IMR-90 (cell line): ENCODE measurements at regions of chr5 and their contacts with region 1.

Region 1: GRCh38 chr5:6745706-6746222 is 32.5 kb downstream of the TENT4A start:
- DNase-seq: peak; percentile 79
- ATAC-seq: peak; percentile 93
- H3K4me3 ChIP-seq: no peak overlapping the region
- H3K27ac ChIP-seq: no peak overlapping the region
- H3K4me1 ChIP-seq: peaks cover 2% of the 10 kb centered on the region
- H3K27me3 ChIP-seq: no peaks in the 10 kb centered on the region
- CTCF ChIP-seq: peak; percentile 88
- POLR2A ChIP-seq: no peak
- RAD21 ChIP-seq: peak; percentile 93

Region 2: GRCh38 chr5:6377905-6378765 is 367.6 kb before region 1 on chr5 and contains the start of gene MED10:
- CTCF ChIA-PET with region 1: no interaction called
- POLR2A ChIA-PET with region 1: no interaction called
- dilution Hi-C with region 1: no loop called
- in situ Hi-C with region 1: no loop called
- intact Hi-C with region 1: loop called (anchors 10 kb)
- DNase-seq: peak; percentile 91
- ATAC-seq: peak; percentile 98
- H3K4me3 ChIP-seq: peak within 1 kb of the TSS; percentile 84
- H3K27ac ChIP-seq: peak within 1 kb of the TSS; percentile 80
- H3K4me1 ChIP-seq: peaks cover 4% of the 10 kb centered on the region
- H3K27me3 ChIP-seq: no peaks in the 10 kb centered on the region
- CTCF ChIP-seq: no peak
- POLR2A ChIP-seq: peak; percentile 85
- RAD21 ChIP-seq: no peak
- total RNA-seq, gene MED10: 9.1 and 15.6 TPM in 2 replicates

Region 3: DNA sequence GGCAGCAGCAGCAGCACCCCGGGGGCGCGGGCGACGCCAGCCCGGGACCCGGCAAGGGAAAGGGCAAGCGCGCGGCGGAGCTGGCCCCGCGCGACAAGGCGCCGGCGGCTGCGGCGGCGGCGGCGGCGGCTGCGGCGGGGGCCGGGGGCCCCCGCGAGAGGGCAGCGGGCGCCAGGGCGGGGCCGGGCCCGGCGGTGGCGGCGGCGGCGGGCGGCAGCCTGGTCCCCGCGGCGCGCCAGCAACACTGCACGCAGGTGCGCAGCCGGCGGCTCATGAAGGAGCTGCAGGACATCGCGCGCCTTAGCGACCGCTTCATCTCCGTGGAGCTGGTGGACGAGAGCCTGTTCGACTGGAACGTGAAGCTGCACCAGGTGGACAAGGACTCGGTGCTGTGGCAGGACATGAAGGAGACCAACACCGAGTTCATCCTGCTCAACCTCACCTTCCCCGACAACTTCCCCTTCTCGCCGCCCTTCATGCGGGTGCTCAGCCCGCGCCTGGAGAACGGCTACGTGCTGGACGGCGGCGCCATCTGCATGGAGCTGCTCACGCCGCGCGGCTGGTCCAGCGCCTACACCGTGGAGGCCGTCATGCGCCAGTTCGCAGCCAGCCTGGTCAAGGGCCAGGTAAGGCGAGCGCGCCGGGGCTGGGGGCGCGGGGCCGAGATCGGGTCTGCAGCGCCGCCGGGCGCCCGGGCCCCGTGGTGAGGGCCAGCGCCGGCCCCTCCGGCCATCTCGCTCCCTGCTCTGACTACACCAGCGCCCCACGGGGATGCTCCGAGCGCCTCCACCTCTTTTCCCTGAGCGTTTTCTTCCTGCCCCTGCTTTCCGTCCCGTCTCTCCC is 296.9 kb before region 1 on chr5 and contains the start of gene UBE2QL1:
- CTCF ChIA-PET with region 1: no interaction called
- POLR2A ChIA-PET with region 1: no interaction called
- dilution Hi-C with region 1: no loop called
- in situ Hi-C with region 1: no loop called
- intact Hi-C with region 1: no loop called
- DNase-seq: no peak
- ATAC-seq: no peak
- H3K4me3 ChIP-seq: no peak within 1 kb of the TSS
- H3K27ac ChIP-seq: no peak within 1 kb of the TSS
- H3K4me1 ChIP-seq: no peaks in the 10 kb centered on the region
- H3K27me3 ChIP-seq: peaks cover 30% of the 10 kb centered on the region
- CTCF ChIP-seq: no peak
- POLR2A ChIP-seq: no peak
- RAD21 ChIP-seq: no peak
- total RNA-seq, gene UBE2QL1: not detected in 2 replicates

Region 4: GRCh38 chr5:6615034-6615815 is 130.5 kb before region 1 on chr5:
- CTCF ChIA-PET with region 1: interaction called, 7 read pairs
- POLR2A ChIA-PET with region 1: no interaction called
- dilution Hi-C with region 1: no loop called
- in situ Hi-C with region 1: no loop called
- intact Hi-C with region 1: loop called (anchors 5 kb)
- DNase-seq: peak; percentile 28
- ATAC-seq: peak; percentile 51
- H3K4me3 ChIP-seq: no peak overlapping the region
- H3K27ac ChIP-seq: no peak overlapping the region
- H3K4me1 ChIP-seq: no peaks in the 10 kb centered on the region
- H3K27me3 ChIP-seq: no peaks in the 10 kb centered on the region
- CTCF ChIP-seq: no peak
- POLR2A ChIP-seq: no peak
- RAD21 ChIP-seq: no peak

Region 5: DNA sequence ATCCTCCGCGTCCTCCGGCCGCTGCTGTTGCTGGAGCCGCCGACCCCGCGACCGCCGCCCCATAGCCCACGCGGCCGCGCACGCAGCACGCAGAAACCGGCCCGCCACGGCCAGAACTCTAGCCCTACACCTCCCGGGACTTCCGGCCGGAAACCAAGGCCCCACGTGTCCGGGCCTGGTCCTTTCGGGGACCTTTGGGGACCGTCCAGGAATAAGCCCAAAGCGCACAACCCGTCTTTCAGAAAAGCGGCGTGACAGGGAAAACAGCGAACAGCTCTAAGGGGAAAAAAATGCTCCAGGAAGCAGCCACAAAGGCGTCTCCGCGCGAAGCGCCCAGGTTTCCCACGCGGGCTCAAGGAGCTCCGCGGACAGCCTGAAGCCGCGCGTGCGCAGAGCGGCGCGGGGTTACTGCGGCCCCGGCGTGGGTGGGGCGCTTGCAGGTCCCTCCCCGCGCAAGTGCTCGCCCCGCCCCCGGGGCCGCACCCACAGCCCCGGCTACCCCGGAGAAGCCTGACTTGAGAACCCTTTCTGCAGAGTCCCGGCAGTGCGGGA is 112.8 kb before region 1 on chr5 and contains the starts of genes NSUN2 and SRD5A1:
- CTCF ChIA-PET with region 1: interaction called, 8 read pairs
- POLR2A ChIA-PET with region 1: no interaction called
- dilution Hi-C with region 1: no loop called
- in situ Hi-C with region 1: loop called (anchors 5 kb)
- intact Hi-C with region 1: loop called (anchors 1 kb)
- DNase-seq: peak; percentile 89
- ATAC-seq: peak; percentile 94
- H3K4me3 ChIP-seq: peak within 1 kb of the TSS; percentile 89
- H3K27ac ChIP-seq: peak within 1 kb of the TSS; percentile 92
- H3K4me1 ChIP-seq: peaks cover 11% of the 10 kb centered on the region
- H3K27me3 ChIP-seq: no peaks in the 10 kb centered on the region
- CTCF ChIP-seq: no peak
- POLR2A ChIP-seq: peak; percentile 78
- RAD21 ChIP-seq: no peak
- total RNA-seq, gene NSUN2: 51.1 and 55.5 TPM in 2 replicates
- total RNA-seq, gene SRD5A1: 6.3 and 9.7 TPM in 2 replicates

Region 6: DNA sequence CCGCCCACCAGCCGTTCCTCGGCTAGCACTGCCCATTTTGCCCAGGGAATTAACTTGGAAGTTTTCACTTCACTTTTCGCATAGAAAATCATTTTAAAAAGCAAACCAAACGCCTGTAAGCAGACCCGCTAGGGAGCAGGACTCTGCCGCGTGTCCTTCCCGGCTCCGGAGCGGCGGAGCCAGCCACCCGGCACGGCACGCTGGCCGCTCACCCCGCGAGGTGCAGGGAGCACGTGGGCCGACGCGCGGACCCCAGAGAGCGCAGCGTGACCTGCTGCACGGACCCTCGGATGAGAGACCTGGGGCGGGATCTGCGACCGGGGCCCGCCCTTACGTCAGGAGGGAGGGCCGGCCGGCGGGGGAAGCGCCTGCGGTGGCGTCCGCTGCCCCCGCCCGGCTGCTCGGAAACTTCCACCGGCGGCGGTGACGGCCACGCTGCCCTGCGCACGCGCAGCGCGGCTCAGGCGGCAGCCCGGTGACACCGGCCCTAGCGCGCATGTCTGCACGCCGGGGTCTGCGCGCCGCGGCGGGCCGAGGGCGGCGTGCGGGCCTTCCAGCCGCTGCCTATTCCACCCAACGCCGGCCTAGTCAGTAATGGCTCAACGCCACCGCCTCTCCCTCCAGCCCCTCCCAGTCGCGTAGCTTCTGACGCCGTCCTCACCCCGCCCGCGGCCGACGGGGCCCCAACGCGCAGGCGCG is 33.0 kb before region 1 on chr5:
- CTCF ChIA-PET with region 1: no interaction called
- POLR2A ChIA-PET with region 1: no interaction called
- dilution Hi-C with region 1: no loop called
- in situ Hi-C with region 1: no loop called
- intact Hi-C with region 1: loop called (anchors 5 kb)
- DNase-seq: peak; percentile 94
- ATAC-seq: peak; percentile 79
- H3K4me3 ChIP-seq: peak overlapping the region; percentile 78
- H3K27ac ChIP-seq: peak overlapping the region; percentile 88
- H3K4me1 ChIP-seq: peaks cover 19% of the 10 kb centered on the region
- H3K27me3 ChIP-seq: no peaks in the 10 kb centered on the region
- CTCF ChIP-seq: no peak
- POLR2A ChIP-seq: peak; percentile 74
- RAD21 ChIP-seq: no peak